Activated CD4-positive, alpha-beta T cell treated with anti-CD3 and anti-CD28 coated beads, Interleukin-2, amount 10 ng/mL, durations not matched to agents 24 days and 14 days (primary cell): ENCODE measurements at regions of chr19 and their contacts with region 1.

Region 1: GRCh38 chr19:11814029-11814699 is at the start of gene ZNF440:
- DNase-seq: peak; percentile 97
- H3K4me3 Mint-ChIP-seq: peak within 1 kb of the TSS; percentile 93
- H3K27ac Mint-ChIP-seq: peak within 1 kb of the TSS; percentile 78
- H3K4me1 Mint-ChIP-seq: peaks cover 9% of the 10 kb centered on the region
- H3K27me3 Mint-ChIP-seq: no peaks in the 10 kb centered on the region
- total RNA-seq, gene ZNF440: 7.4 and 10.5 TPM in 2 replicates

Region 2: DNA sequence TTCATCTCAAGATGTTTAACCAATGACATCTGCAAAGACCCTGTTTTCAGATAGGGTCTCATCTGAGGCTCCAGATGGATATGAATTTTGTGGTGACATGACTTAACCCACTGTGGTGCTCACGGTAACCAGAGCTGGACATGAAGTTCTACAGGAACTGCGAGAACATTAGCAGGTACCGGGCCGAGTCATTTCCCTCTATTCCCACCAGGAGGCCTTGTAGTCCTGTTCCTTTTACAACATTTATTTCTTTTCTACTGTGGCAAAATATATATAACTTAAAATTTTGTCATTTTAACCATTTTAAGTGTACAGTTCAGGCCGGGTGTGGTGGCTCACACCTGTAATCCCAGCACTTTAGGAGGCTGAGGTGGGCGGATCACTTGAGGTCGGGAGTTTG is 525.8 kb before region 1 on chr19:
- intact Hi-C with region 1: no loop called
- DNase-seq: no peak
- H3K4me3 Mint-ChIP-seq: no peak overlapping the region
- H3K27ac Mint-ChIP-seq: no peak overlapping the region
- H3K4me1 Mint-ChIP-seq: peaks cover 3% of the 10 kb centered on the region
- H3K27me3 Mint-ChIP-seq: peaks cover 34% of the 10 kb centered on the region

Region 3: DNA sequence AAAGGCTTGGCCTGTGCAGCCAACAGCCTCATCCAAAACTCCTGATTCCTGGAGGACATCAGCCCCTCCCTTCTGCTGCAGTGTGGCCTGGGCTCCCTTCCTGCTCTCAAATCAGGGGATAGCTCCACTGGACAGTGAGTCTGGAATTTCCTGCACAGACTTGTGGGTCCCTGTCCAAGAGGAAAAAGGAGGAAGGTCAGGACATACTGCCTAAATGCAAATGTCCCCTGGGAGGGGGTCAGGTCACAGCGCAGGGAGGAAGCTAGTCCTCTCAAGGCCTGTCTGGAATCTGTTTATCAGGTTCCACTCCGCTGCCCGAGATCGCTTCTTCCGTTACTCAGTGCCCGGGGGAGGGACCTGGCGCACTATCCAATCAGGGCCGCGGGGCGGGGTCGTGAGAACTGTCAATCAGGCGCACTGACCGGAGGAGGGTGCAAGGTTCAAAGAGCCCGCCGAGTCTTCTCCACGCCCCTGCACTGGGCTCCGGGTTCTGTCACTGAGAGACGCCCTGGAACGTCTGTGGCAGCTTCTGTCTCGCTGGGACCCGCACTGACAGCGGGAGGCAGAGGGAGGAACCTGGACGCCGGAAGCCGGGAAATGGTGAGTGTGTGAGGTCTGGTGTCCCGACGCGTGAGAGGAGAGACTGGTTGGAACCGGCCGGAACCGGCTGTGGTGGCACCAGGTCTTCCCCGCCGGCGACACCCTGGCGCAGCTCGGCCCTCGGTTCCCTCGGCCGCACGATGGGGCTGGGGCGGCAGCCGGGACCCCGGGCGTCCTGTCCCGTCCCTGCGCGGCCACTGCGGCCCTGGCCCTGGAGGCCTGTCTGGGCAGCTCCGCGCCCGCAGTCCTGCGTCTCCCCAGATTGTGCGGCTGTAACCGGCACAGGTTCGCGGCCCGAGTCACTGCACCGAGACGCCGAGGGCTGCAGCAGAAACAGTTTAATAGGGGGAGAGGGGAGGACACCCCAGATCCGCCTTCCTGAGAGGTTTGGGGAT is 47.3 kb before region 1 on chr19 and contains the start of gene ZNF441:
- intact Hi-C with region 1: loop called (anchors 5 kb)
- DNase-seq: peak; percentile 97
- H3K4me3 Mint-ChIP-seq: peak within 1 kb of the TSS; percentile 97
- H3K27ac Mint-ChIP-seq: peak within 1 kb of the TSS; percentile 96
- H3K4me1 Mint-ChIP-seq: peaks cover 15% of the 10 kb centered on the region
- H3K27me3 Mint-ChIP-seq: no peaks in the 10 kb centered on the region
- total RNA-seq, gene ZNF441: 3.1 and 4.0 TPM in 2 replicates

Region 4: DNA sequence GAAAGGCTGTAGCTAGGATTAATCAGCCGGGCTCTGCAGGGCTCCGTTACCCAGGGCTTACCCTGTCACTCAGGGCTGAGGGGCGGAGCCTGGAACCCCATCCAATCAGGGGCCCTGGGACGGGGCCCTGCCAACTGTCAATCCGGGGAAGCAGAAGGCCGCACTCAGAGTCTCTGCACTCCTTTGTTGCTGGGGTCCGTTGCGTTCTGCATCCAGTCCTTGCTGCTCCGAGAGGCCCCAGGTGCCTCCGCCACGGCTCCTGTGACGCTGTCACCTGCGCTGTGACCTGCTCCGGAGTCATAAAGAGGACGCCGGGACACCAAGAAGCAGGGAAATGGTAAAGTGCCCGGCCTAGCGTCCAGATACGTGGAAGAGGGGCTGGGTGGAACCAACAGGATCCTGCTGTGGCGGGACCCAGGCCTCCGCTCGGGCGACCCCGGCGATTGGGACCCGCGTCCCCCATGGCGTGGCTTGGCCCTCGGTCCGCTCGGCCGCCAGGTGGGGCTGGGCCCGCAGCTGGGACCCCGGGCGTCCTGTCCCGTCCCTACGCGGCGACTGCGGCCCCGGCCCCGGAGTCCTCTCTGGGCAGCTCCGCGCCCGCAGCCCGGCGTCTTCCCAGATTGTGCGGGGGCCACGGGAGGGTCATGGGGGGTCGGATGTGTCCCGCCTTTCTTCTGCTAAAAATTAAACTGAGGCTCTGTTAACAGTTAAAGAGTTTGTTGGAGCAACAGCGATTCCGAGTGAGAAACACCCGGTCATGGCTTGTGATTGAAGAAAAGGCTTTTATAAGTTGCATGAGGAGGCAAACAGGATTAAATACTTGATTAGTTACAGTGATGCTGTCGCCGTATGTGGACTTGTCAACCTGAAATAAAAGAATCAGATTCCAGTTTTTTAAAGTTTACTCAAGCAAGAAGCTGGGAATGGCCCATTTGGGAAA is 15.5 kb before region 1 on chr19 and contains the start of gene ZNF491:
- intact Hi-C with region 1: loop called (anchors 2 kb)
- DNase-seq: peak; percentile 91
- H3K4me3 Mint-ChIP-seq: peak within 1 kb of the TSS; percentile 84
- H3K27ac Mint-ChIP-seq: peak within 1 kb of the TSS; percentile 84
- H3K4me1 Mint-ChIP-seq: peaks cover 9% of the 10 kb centered on the region
- H3K27me3 Mint-ChIP-seq: no peaks in the 10 kb centered on the region
- total RNA-seq, gene ZNF491: 0.12 and 0.68 TPM in 2 replicates